ENCODE measurements at regions of chr4 and their contacts with region 1.

Region 1: GRCh38 chr4:87938746-87939145 is 36.8 kb upstream of the SPP1 start:
- DNase-seq: no peak
- ATAC-seq: no peak
- H3K4me3 ChIP-seq: no peak overlapping the region
- H3K27ac ChIP-seq: no peak overlapping the region
- H3K4me1 ChIP-seq: no peaks in the 10 kb centered on the region
- H3K27me3 ChIP-seq: no peaks in the 10 kb centered on the region
- CTCF ChIP-seq: no peak

Region 2: GRCh38 chr4:87882321-87882720 is 56.4 kb before region 1 on chr4:
- intact Hi-C with region 1: loop called in 1 of 10 experiments (anchors 10 kb)
- DNase-seq: no peak
- ATAC-seq: no peak
- H3K4me3 ChIP-seq: no peak overlapping the region
- H3K27ac ChIP-seq: no peak overlapping the region
- H3K4me1 ChIP-seq: peaks cover 0 to 8% (median 0%) of the 10 kb centered on the region in 9 donors
- H3K27me3 ChIP-seq: no peaks in the 10 kb centered on the region
- CTCF ChIP-seq: no peak

Region 3: DNA sequence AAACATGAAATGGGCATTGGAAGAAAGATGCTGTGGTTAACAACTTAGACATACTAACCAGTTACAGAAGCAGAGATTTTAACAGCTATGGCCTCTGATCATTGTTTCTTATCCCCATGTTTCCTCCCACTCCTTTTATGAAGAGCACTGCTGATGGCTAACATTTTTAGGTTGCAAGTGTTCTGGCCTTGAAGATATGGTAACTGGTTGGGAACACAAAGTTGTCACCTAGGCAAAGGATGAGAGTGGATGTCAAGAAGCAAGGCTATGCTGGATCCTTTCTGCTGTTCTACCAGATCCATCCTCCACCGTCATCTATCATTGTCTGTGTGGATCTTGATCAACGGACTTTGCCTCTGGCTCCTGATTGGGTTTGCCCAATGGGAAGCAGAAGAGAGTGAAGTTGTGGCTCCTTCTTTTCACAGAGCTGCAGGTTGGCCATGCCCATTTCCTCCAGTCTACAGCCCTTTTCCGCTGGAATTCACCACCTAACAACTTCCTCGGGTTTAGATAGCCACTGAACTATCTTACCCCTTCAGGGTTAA is 12.1 kb before region 1 on chr4:
- intact Hi-C with region 1: loop called in 6 of 10 experiments (anchors 1 kb)
- DNase-seq: no peak
- ATAC-seq: no peak
- H3K4me3 ChIP-seq: no peak overlapping the region
- H3K27ac ChIP-seq: no peak overlapping the region
- H3K4me1 ChIP-seq: no peaks in the 10 kb centered on the region
- H3K27me3 ChIP-seq: no peaks in the 10 kb centered on the region
- CTCF ChIP-seq: no peak

Region 4: GRCh38 chr4:87973283-87974169 is 34.8 kb after region 1 on chr4:
- intact Hi-C with region 1: no loop called
- DNase-seq: peak; percentile 43 to 63
- ATAC-seq: peak in 7 of 8 donors; percentile 38 to 79 (median 74)
- H3K4me3 ChIP-seq: peak overlapping the region in 2 of 10 donors; percentile 8 to 12
- H3K27ac ChIP-seq: no peak overlapping the region
- H3K4me1 ChIP-seq: peaks cover 0 to 18% (median 0%) of the 10 kb centered on the region in 9 donors
- H3K27me3 ChIP-seq: peaks cover 0 to 37% (median 4%) of the 10 kb centered on the region in 7 donors
- CTCF ChIP-seq: peak; percentile 58 to 89 (median 84)

Region 5: GRCh38 chr4:88006956-88007303 is 68.2 kb after region 1 on chr4:
- intact Hi-C with region 1: no loop called
- DNase-seq: peak in 1 of 2 donors; percentile 11
- ATAC-seq: peak in 1 of 8 donors; percentile 1
- H3K4me3 ChIP-seq: peak overlapping the region in 9 of 10 donors; percentile 74 to 92 (median 80)
- H3K27ac ChIP-seq: peak overlapping the region in 8 of 10 donors; percentile 80 to 87 (median 83)
- H3K4me1 ChIP-seq: peaks cover 7 to 53% (median 35%) of the 10 kb centered on the region in 9 donors
- H3K27me3 ChIP-seq: no peaks in the 10 kb centered on the region
- CTCF ChIP-seq: no peak